Psoas muscle (tissue), 8 donors: ENCODE measurements at regions of chr3 and their contacts with region 1.

Region 1: GRCh38 chr3:107064445-107065060 is 312.7 kb upstream of the CCDC54 start:
- DNase-seq: peak in 1 of 2 donors; percentile 22
- ATAC-seq: peak; percentile 74 to 92 (median 84)
- H3K4me3 ChIP-seq: no peak overlapping the region
- H3K27ac ChIP-seq: no peak overlapping the region
- H3K4me1 ChIP-seq: peaks cover 5% of the 10 kb centered on the region
- H3K27me3 ChIP-seq: no peaks in the 10 kb centered on the region
- CTCF ChIP-seq: peak; percentile 79

Region 2: GRCh38 chr3:105686278-105686897 is 1378.2 kb before region 1 on chr3:
- intact Hi-C with region 1: loop called in 1 of 2 experiments (anchors 10 kb)
- DNase-seq: no peak
- ATAC-seq: peak in 1 of 4 donors; percentile 67
- H3K4me3 ChIP-seq: no peak overlapping the region
- H3K27ac ChIP-seq: no peak overlapping the region
- H3K4me1 ChIP-seq: no peaks in the 10 kb centered on the region
- H3K27me3 ChIP-seq: no peaks in the 10 kb centered on the region
- CTCF ChIP-seq: peak; percentile 79

Region 3: GRCh38 chr3:106824856-106825255 is 239.7 kb before region 1 on chr3:
- intact Hi-C with region 1: loop called (anchors 5 to 10 kb)
- DNase-seq: no peak
- ATAC-seq: peak in 2 of 4 donors; percentile 24 to 71
- H3K4me3 ChIP-seq: no peak overlapping the region
- H3K27ac ChIP-seq: no peak overlapping the region
- H3K4me1 ChIP-seq: no peaks in the 10 kb centered on the region
- H3K27me3 ChIP-seq: no peaks in the 10 kb centered on the region
- CTCF ChIP-seq: peak; percentile 19